HCT116 (cell line): ENCODE measurements at regions of chr3 and their contacts with region 1.

Region 1: DNA sequence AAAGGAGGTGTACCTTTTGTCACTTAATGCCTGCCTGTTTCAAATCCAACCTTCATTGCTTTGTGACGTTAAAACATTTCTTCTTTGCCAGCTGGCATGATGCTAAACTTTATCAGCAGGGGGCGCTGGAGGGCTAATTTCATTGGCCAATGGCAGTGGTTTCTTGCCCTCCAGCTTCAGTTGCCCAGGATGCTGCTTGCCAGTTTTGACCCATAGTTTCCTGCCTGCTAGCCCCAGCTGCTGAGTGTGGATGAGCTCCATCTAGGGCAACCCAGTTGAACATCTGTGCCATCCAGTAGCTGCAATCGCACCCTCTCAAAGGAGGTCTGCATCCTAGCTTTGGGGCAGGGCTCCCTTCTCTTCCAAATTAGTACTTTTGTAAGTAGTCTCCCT is 22.1 kb downstream of the ACKR2 start:
- DNase-seq: peak; percentile 65
- ATAC-seq: peak; percentile 86
- H3K4me3 ChIP-seq: no peak overlapping the region
- H3K27ac ChIP-seq: no peak overlapping the region
- H3K4me1 ChIP-seq: peaks cover 3 to 29% of the 10 kb centered on the region in 2 experiments
- H3K27me3 ChIP-seq: no peaks in the 10 kb centered on the region
- CTCF ChIP-seq: peak; percentile 76 to 90 (median 84); a peak in 5 of 6 replicates
- POLR2A ChIP-seq: no peak
- RAD21 ChIP-seq: peak; percentile 71

Region 2: DNA sequence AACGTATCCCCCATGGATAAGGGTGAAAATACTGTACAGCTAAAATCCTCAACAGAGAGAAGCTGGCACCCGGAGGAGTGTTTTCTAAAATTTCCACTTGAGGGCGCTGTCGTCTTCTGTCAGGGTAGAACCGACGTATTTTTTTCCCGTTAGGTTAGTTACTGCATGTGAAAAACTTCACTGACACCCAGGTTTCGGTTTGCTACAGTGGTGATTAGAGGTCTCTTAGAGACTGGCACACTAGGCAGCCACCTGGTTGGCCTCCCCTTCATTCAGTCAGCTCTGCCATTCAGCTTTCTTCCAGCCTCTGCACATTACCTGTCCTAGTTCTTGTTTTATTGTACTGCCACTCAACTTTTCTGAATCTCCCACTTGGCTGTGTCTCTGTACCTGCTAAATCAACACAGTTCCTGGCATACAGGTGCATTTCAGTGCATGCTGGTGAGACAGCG is 583.7 kb before region 1 on chr3:
- CTCF ChIA-PET with region 1: no interaction called
- POLR2A ChIA-PET with region 1: no interaction called
- RAD21 ChIA-PET with region 1: no interaction called
- intact Hi-C with region 1: loop called (anchors 5 kb)
- DNase-seq: peak; percentile 60
- ATAC-seq: peak; percentile 88
- H3K4me3 ChIP-seq: no peak overlapping the region
- H3K27ac ChIP-seq: no peak overlapping the region
- H3K4me1 ChIP-seq: peaks cover 0 to 5% of the 10 kb centered on the region in 2 experiments; a peak in 1 of 4 replicates
- H3K27me3 ChIP-seq: peaks cover 8% of the 10 kb centered on the region; the same call in 1 of the 2 replicates
- CTCF ChIP-seq: peak; percentile 63 to 93 (median 88)
- POLR2A ChIP-seq: no peak
- RAD21 ChIP-seq: peak; percentile 95

Region 3: DNA sequence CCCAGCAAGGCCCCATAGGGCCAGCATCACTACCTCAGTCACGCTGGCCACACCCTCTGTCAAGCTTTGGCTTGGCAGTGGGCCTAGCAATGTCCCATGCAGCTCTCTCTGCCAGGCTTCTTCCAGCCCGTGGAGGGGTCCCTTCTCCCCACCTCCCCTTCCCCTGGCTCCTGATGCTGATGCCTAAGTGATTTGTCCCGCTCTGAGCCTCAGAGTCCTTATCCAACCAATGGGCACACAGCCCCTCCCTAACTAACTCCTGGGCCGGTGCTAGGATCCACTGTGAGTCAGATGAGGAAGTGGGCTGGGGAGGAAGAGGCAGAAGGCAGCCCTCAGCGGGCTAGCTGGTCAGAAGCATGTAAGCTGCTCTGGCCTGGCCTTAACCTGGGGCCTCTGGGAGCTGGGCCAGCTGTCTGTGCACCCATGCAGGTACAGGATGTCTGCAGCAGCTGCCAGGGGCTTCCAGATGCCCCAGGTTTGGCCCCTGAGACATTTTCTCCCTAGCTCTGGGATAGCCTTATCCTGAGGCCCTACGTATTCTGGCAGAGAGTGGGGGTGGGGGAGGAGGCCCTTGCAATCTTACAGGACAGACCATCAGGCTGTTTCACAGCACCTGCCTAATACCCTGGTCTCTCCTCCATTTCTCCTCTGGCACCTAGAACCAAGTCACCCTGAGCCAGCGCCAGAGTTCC is 178.6 kb before region 1 on chr3:
- CTCF ChIA-PET with region 1: no interaction called
- POLR2A ChIA-PET with region 1: no interaction called
- RAD21 ChIA-PET with region 1: no interaction called
- intact Hi-C with region 1: no loop called
- DNase-seq: peak; percentile 69
- ATAC-seq: peak; percentile 72
- H3K4me3 ChIP-seq: peak overlapping the region; percentile 75 to 86
- H3K27ac ChIP-seq: peak overlapping the region; percentile 84
- H3K4me1 ChIP-seq: peaks cover 42 to 63% of the 10 kb centered on the region in 2 experiments
- H3K27me3 ChIP-seq: no peaks in the 10 kb centered on the region
- CTCF ChIP-seq: no peak
- POLR2A ChIP-seq: no peak
- RAD21 ChIP-seq: no peak

Region 4: GRCh38 chr3:42780892-42781700 is 50.2 kb before region 1 on chr3:
- CTCF ChIA-PET with region 1: interaction called, 7 read pairs
- POLR2A ChIA-PET with region 1: no interaction called
- RAD21 ChIA-PET with region 1: no interaction called
- intact Hi-C with region 1: loop called (anchors 2 kb)
- DNase-seq: peak; percentile 54
- ATAC-seq: peak; percentile 88
- H3K4me3 ChIP-seq: no peak overlapping the region
- H3K27ac ChIP-seq: no peak overlapping the region
- H3K4me1 ChIP-seq: no peaks in the 10 kb centered on the region
- H3K27me3 ChIP-seq: no peaks in the 10 kb centered on the region
- CTCF ChIP-seq: peak; percentile 71 to 78 (median 73); a peak in 5 of 6 replicates
- POLR2A ChIP-seq: no peak
- RAD21 ChIP-seq: peak; percentile 74

Region 5: GRCh38 chr3:42804106-42804830 is 27.0 kb before region 1 on chr3 and contains the start of gene HIGD1A:
- CTCF ChIA-PET with region 1: interaction called, 11 read pairs
- POLR2A ChIA-PET with region 1: interaction called, 3 read pairs
- RAD21 ChIA-PET with region 1: no interaction called
- intact Hi-C with region 1: no loop called
- DNase-seq: peak; percentile 86
- ATAC-seq: peak; percentile 98
- H3K4me3 ChIP-seq: peak within 1 kb of the TSS; percentile 88 to 98
- H3K27ac ChIP-seq: peak within 1 kb of the TSS; percentile 70
- H3K4me1 ChIP-seq: peaks cover 0 to 15% of the 10 kb centered on the region in 2 experiments; a peak in 2 of 4 replicates
- H3K27me3 ChIP-seq: no peaks in the 10 kb centered on the region
- CTCF ChIP-seq: no peak
- POLR2A ChIP-seq: no peak
- RAD21 ChIP-seq: no peak
- total RNA-seq, gene HIGD1A: 71.2 TPM

Region 6: DNA sequence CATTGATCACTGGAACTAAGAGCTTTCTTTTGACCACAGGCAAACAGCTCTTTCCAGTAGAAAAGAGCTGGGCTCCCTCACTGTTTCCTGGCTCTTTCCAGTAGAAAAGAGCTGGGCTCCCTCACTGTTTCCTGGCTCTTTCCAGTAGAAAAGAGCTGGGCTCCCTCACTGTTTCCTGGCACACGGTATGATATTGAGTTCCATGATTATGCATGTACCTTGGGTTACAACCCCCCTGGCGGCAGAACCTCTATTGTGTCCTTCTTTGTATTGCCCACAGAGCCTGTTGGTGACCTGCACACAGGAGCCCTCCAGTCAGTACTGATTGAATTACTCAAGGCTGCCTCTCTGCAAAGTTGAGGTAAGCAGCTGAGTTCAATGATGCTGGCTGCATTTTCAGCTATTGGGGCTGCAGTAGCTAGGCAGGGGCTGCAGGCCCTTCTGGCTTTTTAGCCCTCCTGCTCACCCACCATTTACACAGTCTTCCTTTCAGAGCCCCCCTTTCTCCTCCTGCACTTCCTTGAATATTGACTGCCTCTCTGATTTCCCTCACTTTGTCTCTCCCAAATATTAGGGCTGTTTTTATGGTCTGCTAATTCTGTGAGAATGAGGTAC is 11.9 kb before region 1 on chr3:
- CTCF ChIA-PET with region 1: interaction called, 20 read pairs
- POLR2A ChIA-PET with region 1: interaction called, 3 read pairs
- RAD21 ChIA-PET with region 1: no interaction called
- intact Hi-C with region 1: no loop called
- DNase-seq: no peak
- ATAC-seq: peak; percentile 78
- H3K4me3 ChIP-seq: no peak overlapping the region
- H3K27ac ChIP-seq: no peak overlapping the region
- H3K4me1 ChIP-seq: peaks cover 2 to 15% of the 10 kb centered on the region in 2 experiments; a peak in 2 of 4 replicates
- H3K27me3 ChIP-seq: no peaks in the 10 kb centered on the region
- CTCF ChIP-seq: peak in 1 of 3 experiments; percentile 7; a peak in 1 of 6 replicates
- POLR2A ChIP-seq: no peak
- RAD21 ChIP-seq: no peak

Region 7: GRCh38 chr3:42880601-42881451 is 49.5 kb after region 1 on chr3:
- CTCF ChIA-PET with region 1: interaction called, 5 read pairs
- POLR2A ChIA-PET with region 1: no interaction called
- RAD21 ChIA-PET with region 1: no interaction called
- intact Hi-C with region 1: loop called (anchors 1 kb)
- DNase-seq: peak; percentile 55
- ATAC-seq: peak; percentile 99
- H3K4me3 ChIP-seq: peak overlapping the region; percentile 42 to 53
- H3K27ac ChIP-seq: peak overlapping the region; percentile 30; the same call in 1 of the 2 replicates
- H3K4me1 ChIP-seq: peaks cover 0 to 13% of the 10 kb centered on the region in 2 experiments; a peak in 3 of 4 replicates
- H3K27me3 ChIP-seq: no peaks in the 10 kb centered on the region
- CTCF ChIP-seq: peak; percentile 74 to 86 (median 82)
- POLR2A ChIP-seq: no peak
- RAD21 ChIP-seq: peak; percentile 94